T-cell (primary cell): ENCODE measurements at regions of chr6 and their contacts with region 1.

Region 1: GRCh38 chr6:136792410-136793262 is at the start of gene MAP3K5:
- DNase-seq: peak; percentile 90 to 97 (median 95)
- ATAC-seq: peak; percentile 80 to 86 (median 84)
- H3K4me3 ChIP-seq: peak within 1 kb of the TSS; percentile 87 to 90
- H3K4me3 Mint-ChIP-seq: peak within 1 kb of the TSS; percentile 96 to 98 (median 97)
- H3K27ac ChIP-seq: peak within 1 kb of the TSS; percentile 97
- H3K27ac Mint-ChIP-seq: peak within 1 kb of the TSS; percentile 92 to 96
- H3K4me1 ChIP-seq: peaks cover 13 to 24% of the 10 kb centered on the region in 2 experiments
- H3K4me1 Mint-ChIP-seq: peaks cover 36 to 41% (median 40%) of the 10 kb centered on the region in 3 donors
- H3K27me3 ChIP-seq: no peaks in the 10 kb centered on the region
- H3K27me3 Mint-ChIP-seq: no peaks in the 10 kb centered on the region
- total RNA-seq, gene MAP3K5: 17.8 to 29.2 (median 20.6) TPM

Region 2: DNA sequence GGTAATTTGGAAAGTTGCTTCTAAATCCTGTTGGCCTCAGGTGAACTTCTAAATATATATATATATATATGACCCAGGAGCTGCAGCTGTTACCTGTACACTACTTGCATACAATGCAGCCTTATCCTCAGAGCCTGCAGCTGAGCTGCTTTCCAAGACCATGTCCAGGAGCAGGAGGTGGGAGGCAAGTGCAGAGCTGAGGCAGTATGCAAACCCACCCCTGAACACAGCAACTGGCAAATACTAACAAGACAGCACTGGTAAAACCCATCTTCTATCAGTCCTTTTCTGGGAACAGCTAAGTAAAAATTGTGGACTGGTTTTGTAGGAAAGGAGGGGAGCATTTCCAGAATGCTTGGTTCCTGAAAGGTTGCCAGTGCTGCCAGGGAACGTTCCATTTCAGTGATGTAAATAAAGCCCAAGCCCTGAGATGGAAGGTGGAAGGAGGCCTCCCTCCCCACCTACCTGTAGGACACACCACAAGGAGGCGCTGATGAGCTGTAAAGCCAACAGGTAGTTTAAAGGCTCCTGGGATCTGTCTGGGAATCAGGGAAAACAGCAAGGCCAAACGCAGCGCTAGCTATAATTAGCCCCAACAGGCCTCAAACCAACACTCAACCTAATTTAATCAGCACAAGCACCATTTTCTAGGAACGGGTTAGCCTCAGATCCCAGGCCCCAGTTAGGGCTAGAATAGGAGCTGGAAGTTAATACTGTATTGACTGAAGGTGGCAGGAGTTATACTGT is 148.6 kb before region 1 on chr6:
- CTCF ChIA-PET with region 1: interaction called, 109 to 320 read pairs
- POLR2A ChIA-PET with region 1: interaction called, 8 to 13 read pairs
- DNase-seq: peak; percentile 43 to 88 (median 73)
- ATAC-seq: peak; percentile 66 to 77 (median 71)
- H3K4me3 ChIP-seq: no peak overlapping the region
- H3K4me3 Mint-ChIP-seq: no peak overlapping the region
- H3K27ac ChIP-seq: no peak overlapping the region
- H3K27ac Mint-ChIP-seq: peak overlapping the region in 1 of 2 donors; percentile 12
- H3K4me1 ChIP-seq: peaks cover 0 to 16% of the 10 kb centered on the region in 2 experiments
- H3K4me1 Mint-ChIP-seq: peaks cover 0 to 5% (median 2%) of the 10 kb centered on the region in 3 donors
- H3K27me3 ChIP-seq: no peaks in the 10 kb centered on the region
- H3K27me3 Mint-ChIP-seq: no peaks in the 10 kb centered on the region

Region 3: GRCh38 chr6:136723780-136724179 is 68.9 kb before region 1 on chr6:
- CTCF ChIA-PET with region 1: interaction called, 3 to 14 read pairs
- POLR2A ChIA-PET with region 1: no interaction called
- DNase-seq: peak in 32 of 35 experiments; percentile 4 to 44 (median 21)
- ATAC-seq: peak; percentile 84 to 99 (median 90)
- H3K4me3 ChIP-seq: no peak overlapping the region
- H3K4me3 Mint-ChIP-seq: peak overlapping the region in 1 of 3 donors; percentile 43
- H3K27ac ChIP-seq: no peak overlapping the region
- H3K27ac Mint-ChIP-seq: peak overlapping the region; percentile 23 to 44
- H3K4me1 ChIP-seq: peaks cover 2 to 10% of the 10 kb centered on the region in 2 experiments
- H3K4me1 Mint-ChIP-seq: peaks cover 30 to 63% (median 45%) of the 10 kb centered on the region in 3 donors
- H3K27me3 ChIP-seq: no peaks in the 10 kb centered on the region
- H3K27me3 Mint-ChIP-seq: no peaks in the 10 kb centered on the region

Region 4: DNA sequence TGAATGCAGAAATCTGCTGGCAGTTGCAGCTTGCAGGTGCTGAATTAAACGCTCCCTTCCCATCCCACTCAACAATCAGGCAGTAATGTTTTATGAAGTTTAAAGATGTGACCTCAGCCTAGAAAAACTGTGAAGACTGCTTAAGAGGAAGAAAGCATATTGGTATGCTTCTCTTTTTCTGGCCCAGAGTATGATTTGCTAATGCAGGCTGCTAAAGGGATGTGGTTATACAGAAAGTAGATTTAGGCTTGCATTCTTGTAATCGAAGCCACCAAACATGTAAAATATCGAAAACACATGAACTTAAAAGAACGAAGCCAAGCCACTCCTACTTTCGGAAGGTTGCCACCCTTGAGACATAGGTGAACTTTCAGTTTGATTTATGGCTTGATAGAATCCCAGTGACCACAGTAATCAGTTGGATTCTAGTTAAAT is 41.1 kb before region 1 on chr6:
- CTCF ChIA-PET with region 1: interaction called, 13 to 17 read pairs
- POLR2A ChIA-PET with region 1: interaction called, 4 to 17 read pairs
- DNase-seq: peak in 19 of 35 experiments; percentile 12 to 66 (median 33)
- ATAC-seq: peak; percentile 59 to 79 (median 72)
- H3K4me3 ChIP-seq: peak overlapping the region in 1 of 2 donors; percentile 5
- H3K4me3 Mint-ChIP-seq: peak overlapping the region; percentile 3 to 75 (median 59)
- H3K27ac ChIP-seq: peak overlapping the region; percentile 71
- H3K27ac Mint-ChIP-seq: peak overlapping the region; percentile 89 to 92
- H3K4me1 ChIP-seq: peaks cover 25 to 57% of the 10 kb centered on the region in 2 experiments
- H3K4me1 Mint-ChIP-seq: peaks cover 80 to 93% (median 81%) of the 10 kb centered on the region in 3 donors
- H3K27me3 ChIP-seq: no peaks in the 10 kb centered on the region
- H3K27me3 Mint-ChIP-seq: no peaks in the 10 kb centered on the region

Region 5: DNA sequence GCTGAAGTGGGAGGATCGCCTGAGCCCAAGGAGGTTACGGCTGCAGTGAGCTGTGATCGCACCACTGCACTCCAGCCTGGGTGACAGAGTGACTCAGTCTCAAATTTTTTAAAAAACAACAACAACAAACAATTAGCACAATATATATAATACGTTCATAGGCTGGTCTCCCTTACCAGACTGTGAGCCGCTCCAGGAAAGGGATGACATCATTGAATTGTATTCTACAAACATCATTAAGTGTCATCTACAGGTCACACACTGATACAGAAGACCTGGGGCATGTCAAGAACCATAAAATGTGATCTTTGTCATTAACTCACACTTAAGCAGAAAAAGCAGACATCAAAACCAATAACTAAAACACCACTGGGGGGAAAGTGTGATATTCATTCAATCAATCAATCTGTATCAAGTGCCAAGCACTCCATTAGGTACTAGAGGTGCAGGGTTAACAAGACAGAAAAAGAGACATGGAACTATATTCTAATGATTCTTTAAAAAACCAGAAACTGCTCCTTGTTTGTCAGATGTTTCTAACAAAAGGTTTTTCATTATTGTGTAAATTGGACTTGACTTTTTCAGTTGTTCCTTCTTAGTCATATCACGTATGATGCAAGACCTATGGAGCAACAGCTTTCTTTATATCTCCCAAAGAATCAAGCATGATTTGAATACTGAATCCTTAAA is 18.1 kb before region 1 on chr6:
- CTCF ChIA-PET with region 1: interaction called in 1 of 2 experiments, 10 read pairs
- POLR2A ChIA-PET with region 1: no interaction called
- DNase-seq: no peak
- ATAC-seq: no peak
- H3K4me3 ChIP-seq: no peak overlapping the region
- H3K4me3 Mint-ChIP-seq: no peak overlapping the region
- H3K27ac ChIP-seq: no peak overlapping the region
- H3K27ac Mint-ChIP-seq: no peak overlapping the region
- H3K4me1 ChIP-seq: peaks cover 0 to 20% of the 10 kb centered on the region in 2 experiments
- H3K4me1 Mint-ChIP-seq: peaks cover 27 to 62% (median 46%) of the 10 kb centered on the region in 3 donors
- H3K27me3 ChIP-seq: no peaks in the 10 kb centered on the region
- H3K27me3 Mint-ChIP-seq: no peaks in the 10 kb centered on the region

Region 6: GRCh38 chr6:136859430-136859829 is 66.8 kb after region 1 on chr6:
- CTCF ChIA-PET with region 1: no interaction called
- POLR2A ChIA-PET with region 1: no interaction called
- DNase-seq: no peak
- ATAC-seq: no peak
- H3K4me3 ChIP-seq: no peak overlapping the region
- H3K4me3 Mint-ChIP-seq: no peak overlapping the region
- H3K27ac ChIP-seq: no peak overlapping the region
- H3K27ac Mint-ChIP-seq: no peak overlapping the region
- H3K4me1 ChIP-seq: no peaks in the 10 kb centered on the region
- H3K4me1 Mint-ChIP-seq: no peaks in the 10 kb centered on the region
- H3K27me3 ChIP-seq: no peaks in the 10 kb centered on the region
- H3K27me3 Mint-ChIP-seq: no peaks in the 10 kb centered on the region

Region 7: GRCh38 chr6:137076277-137077068 is 283.8 kb after region 1 on chr6:
- CTCF ChIA-PET with region 1: no interaction called
- POLR2A ChIA-PET with region 1: no interaction called
- DNase-seq: peak in 32 of 35 experiments; percentile 9 to 70 (median 32)
- ATAC-seq: peak; percentile 76 to 82 (median 77)
- H3K4me3 ChIP-seq: no peak overlapping the region
- H3K4me3 Mint-ChIP-seq: no peak overlapping the region
- H3K27ac ChIP-seq: no peak overlapping the region
- H3K27ac Mint-ChIP-seq: no peak overlapping the region
- H3K4me1 ChIP-seq: no peaks in the 10 kb centered on the region
- H3K4me1 Mint-ChIP-seq: no peaks in the 10 kb centered on the region
- H3K27me3 ChIP-seq: peaks cover 0 to 3% of the 10 kb centered on the region in 2 experiments
- H3K27me3 Mint-ChIP-seq: peaks cover 19 to 42% of the 10 kb centered on the region in 2 donors